Right ventricle myocardium inferior (tissue), 1 donor: ENCODE measurements at regions of chr5 and their contacts with region 1.

Region 1: GRCh38 chr5:989961-990530 is 18.6 kb upstream of the NKD2 start:
- DNase-seq: peak; percentile 83
- ATAC-seq: peak; percentile 60

Region 2: DNA sequence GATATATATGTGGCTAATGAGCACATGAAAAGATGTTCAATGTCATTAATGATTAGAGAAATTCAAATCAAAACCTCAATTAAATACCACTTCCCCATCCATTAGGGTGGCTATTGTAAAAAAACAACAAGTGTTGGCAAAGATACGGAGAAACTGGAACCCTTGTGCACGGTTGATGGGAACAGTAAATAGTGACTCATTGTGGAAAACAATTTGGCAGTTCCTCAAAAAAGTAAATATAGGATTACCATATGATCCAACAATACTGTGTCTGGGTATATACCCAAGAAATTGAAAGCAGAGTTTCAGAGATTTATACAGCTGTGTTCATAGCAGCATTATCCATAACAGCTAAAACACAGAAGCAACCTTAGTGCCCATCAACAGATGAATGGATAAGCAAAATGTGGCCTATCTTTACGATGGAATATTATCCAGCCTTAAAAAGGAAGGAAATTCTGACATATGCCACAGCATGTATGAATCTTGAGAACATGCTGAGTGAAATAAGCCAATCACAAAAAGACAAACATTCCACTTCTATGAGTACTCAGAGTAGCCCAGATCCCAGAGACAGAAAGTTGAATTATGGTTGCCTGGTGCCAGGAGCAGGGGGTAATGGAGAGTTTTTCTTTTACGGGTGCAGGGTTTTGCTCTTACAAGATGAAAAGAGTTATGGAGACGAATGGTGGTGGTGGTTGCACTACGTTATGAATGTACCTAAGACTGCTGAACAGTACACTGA is 840.1 kb before region 1 on chr5:
- intact Hi-C with region 1: no loop called
- DNase-seq: no peak
- ATAC-seq: no peak

Region 3: DNA sequence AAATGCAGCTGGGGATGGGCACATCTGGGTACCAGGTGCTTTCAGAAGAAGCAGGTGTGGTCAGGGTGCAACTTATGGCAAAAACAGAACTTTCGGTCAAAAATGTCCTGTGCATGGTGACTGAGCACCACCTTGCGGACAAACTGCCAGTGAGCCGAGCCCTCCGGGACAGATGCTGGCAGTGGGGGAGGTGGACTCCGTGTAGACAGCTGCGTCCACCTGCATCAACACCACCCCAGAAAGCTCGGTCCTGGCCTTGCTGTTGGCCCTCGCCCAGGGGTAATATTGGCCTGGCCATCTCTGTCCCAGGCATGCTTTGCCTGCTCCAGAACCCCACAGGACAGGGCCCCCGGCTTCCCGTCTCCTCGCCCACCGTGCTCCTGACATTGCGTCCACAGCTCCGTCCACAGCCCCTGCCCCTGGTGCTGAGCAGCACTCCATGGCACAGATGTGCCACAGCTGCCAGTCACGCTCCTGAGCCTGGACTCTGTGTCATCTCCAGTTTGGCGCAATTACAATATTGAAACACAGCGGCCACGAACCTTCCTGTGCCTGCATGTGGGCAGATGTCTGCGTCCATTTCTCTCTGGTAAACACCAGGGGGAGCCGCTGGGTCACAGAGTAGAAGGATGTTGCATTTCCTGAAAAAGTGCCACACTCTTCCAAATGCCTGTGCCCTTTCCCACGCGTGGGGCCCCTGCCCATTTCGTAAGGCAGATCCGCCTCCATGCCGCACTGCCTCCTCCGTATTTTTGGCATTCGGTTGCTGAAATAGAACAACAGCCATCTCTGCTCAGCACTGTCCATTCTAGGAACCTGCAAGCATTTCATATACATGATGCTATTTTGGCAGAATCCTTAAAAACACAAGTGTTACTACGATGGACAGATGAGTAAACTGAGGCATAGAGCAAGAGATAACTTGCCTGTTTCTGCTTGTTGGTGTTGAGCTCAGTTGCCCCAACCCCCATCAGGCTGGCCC is 178.0 kb after region 1 on chr5:
- intact Hi-C with region 1: loop called (anchors 5 kb)
- DNase-seq: peak; percentile 85
- ATAC-seq: peak; percentile 81

Region 4: GRCh38 chr5:1344975-1345838 is 355.2 kb after region 1 on chr5 and contains the start of gene CLPTM1L:
- intact Hi-C with region 1: loop called (anchors 10 kb)
- DNase-seq: peak; percentile 95
- ATAC-seq: peak; percentile 97
- total RNA-seq, gene CLPTM1L: 33.3 TPM